Dorsolateral prefrontal cortex (tissue), 120 donors: ENCODE measurements at regions of chr11 and their contacts with region 1.

Region 1: GRCh38 chr11:15101072-15101709 is 13.5 kb upstream of the INSC start:
- DNase-seq: peak in 9 of 10 donors; percentile 44 to 80 (median 69)
- H3K4me3 ChIP-seq: no peak overlapping the region
- H3K27ac ChIP-seq: no peak overlapping the region
- H3K27me3 ChIP-seq: peaks cover 0 to 34% (median 8%) of the 10 kb centered on the region in 45 donors
- CTCF ChIP-seq: peak; percentile 68 to 99 (median 92)

Region 2: DNA sequence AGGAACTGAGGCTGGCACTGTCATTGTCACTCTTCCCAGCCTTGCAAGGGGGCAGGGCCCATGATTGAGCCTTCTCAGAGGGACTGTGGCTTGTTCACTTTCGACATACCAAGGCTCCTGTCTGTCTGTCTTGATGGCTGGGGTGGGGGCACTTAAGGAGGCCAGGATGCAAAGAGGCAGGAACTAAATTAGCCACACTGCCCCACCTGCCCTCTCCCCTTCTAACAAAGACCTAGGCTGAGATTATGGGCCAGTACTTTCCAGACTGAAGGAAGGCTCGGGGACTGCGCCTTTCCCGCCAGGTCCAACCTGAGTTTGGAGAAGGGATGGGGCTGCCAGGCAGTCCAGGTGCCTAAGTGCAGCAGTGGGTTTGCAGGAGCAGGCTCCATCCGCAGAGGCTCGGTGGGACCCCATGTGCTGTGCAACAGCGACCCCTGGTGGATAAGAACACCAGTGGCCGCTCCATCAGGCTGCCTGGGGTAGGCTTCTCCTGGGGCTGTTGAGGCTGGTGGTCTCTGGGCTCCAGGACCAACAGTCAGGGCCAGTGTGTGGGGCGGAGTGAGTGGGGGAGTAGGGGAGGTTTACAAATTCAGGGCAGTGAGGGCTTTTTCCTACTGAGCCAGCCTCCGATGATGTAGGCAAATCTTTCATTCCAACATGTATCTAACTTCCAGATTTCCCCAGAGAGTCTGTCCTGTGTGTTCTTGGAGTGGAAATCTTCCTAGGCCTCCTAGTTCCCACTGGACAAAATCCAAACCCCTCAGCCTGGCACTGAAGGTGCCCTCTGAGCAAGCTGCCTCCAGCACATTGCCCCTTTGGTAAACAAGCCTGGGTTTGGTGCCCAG is 107.4 kb after region 1 on chr11:
- intact Hi-C with region 1: loop called (anchors 1 kb)
- DNase-seq: peak; percentile 45 to 91 (median 78)
- H3K4me3 ChIP-seq: no peak overlapping the region
- H3K27ac ChIP-seq: no peak overlapping the region
- H3K27me3 ChIP-seq: peaks cover 0 to 21% (median 0%) of the 10 kb centered on the region in 45 donors
- CTCF ChIP-seq: peak; percentile 75 to 99 (median 96)